Breast epithelium (tissue), 4 donors: ENCODE measurements at regions of chr10 and their contacts with region 1.

Region 1: DNA sequence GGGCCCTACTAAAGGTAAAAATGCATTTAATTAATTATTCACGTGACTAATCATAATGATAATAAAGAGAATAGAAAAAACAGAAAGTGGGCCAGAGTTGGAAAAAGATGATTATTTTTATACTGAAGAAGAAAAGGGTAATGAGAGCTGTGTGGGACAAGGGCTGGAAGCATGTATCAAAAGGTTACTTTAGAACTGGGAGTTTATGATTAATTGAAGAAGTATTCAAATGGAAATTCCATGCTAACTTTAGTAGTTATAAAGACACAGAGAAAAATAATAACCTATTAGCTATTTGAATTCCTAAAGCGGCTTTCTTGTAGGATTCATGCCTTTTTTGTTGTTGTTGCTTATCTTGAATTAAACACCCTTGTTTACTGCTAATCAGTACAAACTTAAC is 49.9 kb downstream of the MKX start:
- DNase-seq: no peak
- H3K4me3 ChIP-seq: no peak overlapping the region
- H3K27ac ChIP-seq: no peak overlapping the region
- H3K4me1 ChIP-seq: no peaks in the 10 kb centered on the region
- H3K27me3 ChIP-seq: peaks cover 0 to 3% of the 10 kb centered on the region in 2 donors
- CTCF ChIP-seq: no peak
- POLR2A ChIP-seq: no peak

Region 2: DNA sequence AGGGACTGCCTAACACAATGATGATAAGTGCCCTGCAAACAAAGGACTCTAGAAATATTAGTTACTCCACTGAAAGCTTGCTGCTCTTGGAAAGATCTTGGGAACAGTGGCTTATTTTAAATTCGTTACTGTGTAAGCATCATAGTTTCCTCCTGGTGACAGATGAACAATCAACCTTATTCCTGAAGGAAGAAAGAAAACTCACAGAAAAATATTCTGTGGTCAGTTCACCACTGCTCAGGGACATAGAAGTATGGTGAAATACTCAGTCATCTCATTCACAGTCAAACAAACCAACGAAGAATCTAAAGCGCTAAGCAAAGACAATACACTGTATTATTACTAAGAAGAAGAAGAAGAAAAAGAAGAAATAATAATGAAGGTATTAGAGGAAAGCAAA is 22.2 kb after region 1 on chr10:
- intact Hi-C with region 1: loop called (anchors 2 kb)
- DNase-seq: no peak
- H3K4me3 ChIP-seq: no peak overlapping the region
- H3K27ac ChIP-seq: no peak overlapping the region
- H3K4me1 ChIP-seq: no peaks in the 10 kb centered on the region
- H3K27me3 ChIP-seq: peaks cover 0 to 4% of the 10 kb centered on the region in 2 donors
- CTCF ChIP-seq: no peak
- POLR2A ChIP-seq: no peak